ENCODE measurements at regions of chr2 and their contacts with region 1.

Region 1: GRCh38 chr2:27489498-27490397 is at the start of gene IFT172:
- DNase-seq: peak; percentile 99
- ATAC-seq: peak; percentile 99
- H3K4me3 ChIP-seq: peak within 1 kb of the TSS; percentile 69 to 83 (median 77)
- H3K27ac ChIP-seq: peak within 1 kb of the TSS; percentile 75 to 85 (median 83)
- H3K4me1 ChIP-seq: peaks cover 13 to 25% of the 10 kb centered on the region in 2 donors
- H3K27me3 ChIP-seq: peaks cover 0 to 7% (median 0%) of the 10 kb centered on the region in 3 donors
- CTCF ChIP-seq: no peak
- POLR2A ChIP-seq: peak; percentile 48 to 76
- total RNA-seq, gene IFT172: 3.1 to 16.8 (median 8.6) TPM

Region 2: GRCh38 chr2:27217217-27218121 is 272.3 kb before region 1 on chr2 and contains the start of gene CAD:
- in situ Hi-C with region 1: no loop called
- intact Hi-C with region 1: loop called (anchors 10 kb)
- DNase-seq: peak; percentile 72 to 76
- ATAC-seq: peak; percentile 63
- H3K4me3 ChIP-seq: peak within 1 kb of the TSS; percentile 57 to 65 (median 63)
- H3K27ac ChIP-seq: peak within 1 kb of the TSS; percentile 73 to 77 (median 74)
- H3K4me1 ChIP-seq: peaks cover 11 to 21% of the 10 kb centered on the region in 2 donors
- H3K27me3 ChIP-seq: no peaks in the 10 kb centered on the region
- CTCF ChIP-seq: peak in 4 of 5 experiments; percentile 10 to 34 (median 31)
- POLR2A ChIP-seq: no peak
- total RNA-seq, gene CAD: 2.7 to 10.2 (median 7.1) TPM

Region 3: GRCh38 chr2:27335311-27335710 is 154.4 kb before region 1 on chr2:
- in situ Hi-C with region 1: no loop called
- intact Hi-C with region 1: no loop called
- DNase-seq: no peak
- ATAC-seq: no peak
- H3K4me3 ChIP-seq: no peak overlapping the region
- H3K27ac ChIP-seq: no peak overlapping the region
- H3K4me1 ChIP-seq: no peaks in the 10 kb centered on the region
- H3K27me3 ChIP-seq: no peaks in the 10 kb centered on the region
- CTCF ChIP-seq: no peak
- POLR2A ChIP-seq: no peak

Region 4: DNA sequence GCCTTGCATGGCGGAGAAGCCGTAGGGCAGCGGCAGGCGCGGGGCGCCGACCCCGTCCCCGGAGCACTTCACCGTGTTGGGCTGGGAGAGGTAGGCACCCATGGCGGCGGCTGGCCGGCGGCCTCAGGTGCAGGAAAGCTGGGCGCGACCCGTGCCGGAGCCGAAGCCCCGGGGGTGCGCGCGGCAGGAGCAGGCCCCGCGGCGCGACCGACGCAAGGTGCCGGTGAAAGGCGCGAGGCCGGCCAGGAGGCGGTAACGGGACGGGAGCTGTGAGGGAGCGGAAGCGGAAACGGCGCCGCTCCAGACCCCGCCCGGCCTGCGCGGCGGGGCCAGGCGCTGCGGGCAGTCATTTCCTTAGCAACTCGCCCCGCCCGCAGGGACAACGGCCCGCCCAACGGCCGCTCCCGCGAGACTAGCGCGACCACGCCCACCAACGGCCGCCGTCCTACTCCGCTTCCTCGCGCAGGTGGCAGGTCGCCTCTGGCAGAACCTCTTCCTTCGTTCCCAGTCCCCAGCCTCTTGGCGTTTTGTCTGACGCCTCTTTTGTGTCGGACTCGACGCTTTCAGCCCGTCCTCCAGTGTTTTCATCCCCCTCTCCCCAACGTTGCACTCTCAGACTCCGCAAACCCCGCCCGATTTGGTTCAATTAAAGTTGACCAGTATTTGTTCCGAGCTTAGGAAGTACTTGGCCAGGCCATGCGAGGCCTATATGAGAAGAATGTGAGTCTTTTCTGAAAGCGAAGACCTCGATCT is 80.3 kb before region 1 on chr2 and contains the start of gene PPM1G:
- in situ Hi-C with region 1: no loop called
- intact Hi-C with region 1: loop called (anchors 1 kb)
- DNase-seq: peak; percentile 90 to 92
- ATAC-seq: peak; percentile 94 to 95
- H3K4me3 ChIP-seq: peak within 1 kb of the TSS; percentile 74 to 98 (median 96)
- H3K27ac ChIP-seq: peak within 1 kb of the TSS; percentile 89 to 97 (median 94)
- H3K4me1 ChIP-seq: peaks cover 15 to 24% of the 10 kb centered on the region in 2 donors
- H3K27me3 ChIP-seq: no peaks in the 10 kb centered on the region
- CTCF ChIP-seq: peak in 2 of 5 experiments; percentile 12 to 16
- POLR2A ChIP-seq: peak; percentile 57 to 72
- total RNA-seq, gene PPM1G: 47.2 to 111 (median 92.2) TPM

Region 5: GRCh38 chr2:27527182-27527581 is 37.4 kb after region 1 on chr2:
- in situ Hi-C with region 1: no loop called
- intact Hi-C with region 1: no loop called
- DNase-seq: no peak
- ATAC-seq: no peak
- H3K4me3 ChIP-seq: no peak overlapping the region
- H3K27ac ChIP-seq: no peak overlapping the region
- H3K4me1 ChIP-seq: no peaks in the 10 kb centered on the region
- H3K27me3 ChIP-seq: no peaks in the 10 kb centered on the region
- CTCF ChIP-seq: no peak
- POLR2A ChIP-seq: no peak

Region 6: GRCh38 chr2:27582695-27583389 is 93.1 kb after region 1 on chr2 and contains the start of gene ZNF512:
- in situ Hi-C with region 1: no loop called
- intact Hi-C with region 1: loop called (anchors 5 kb)
- DNase-seq: peak; percentile 68 to 80
- ATAC-seq: peak; percentile 82 to 92
- H3K4me3 ChIP-seq: peak within 1 kb of the TSS; percentile 54 to 86 (median 64)
- H3K27ac ChIP-seq: peak within 1 kb of the TSS; percentile 43 to 74 (median 63)
- H3K4me1 ChIP-seq: peaks cover 14 to 16% of the 10 kb centered on the region in 2 donors
- H3K27me3 ChIP-seq: no peaks in the 10 kb centered on the region
- CTCF ChIP-seq: peak in 1 of 5 experiments; percentile 5
- POLR2A ChIP-seq: peak in 1 of 2 donors; percentile 55
- total RNA-seq, gene ZNF512: 5.8 to 15.6 (median 8.4) TPM

Region 7: DNA sequence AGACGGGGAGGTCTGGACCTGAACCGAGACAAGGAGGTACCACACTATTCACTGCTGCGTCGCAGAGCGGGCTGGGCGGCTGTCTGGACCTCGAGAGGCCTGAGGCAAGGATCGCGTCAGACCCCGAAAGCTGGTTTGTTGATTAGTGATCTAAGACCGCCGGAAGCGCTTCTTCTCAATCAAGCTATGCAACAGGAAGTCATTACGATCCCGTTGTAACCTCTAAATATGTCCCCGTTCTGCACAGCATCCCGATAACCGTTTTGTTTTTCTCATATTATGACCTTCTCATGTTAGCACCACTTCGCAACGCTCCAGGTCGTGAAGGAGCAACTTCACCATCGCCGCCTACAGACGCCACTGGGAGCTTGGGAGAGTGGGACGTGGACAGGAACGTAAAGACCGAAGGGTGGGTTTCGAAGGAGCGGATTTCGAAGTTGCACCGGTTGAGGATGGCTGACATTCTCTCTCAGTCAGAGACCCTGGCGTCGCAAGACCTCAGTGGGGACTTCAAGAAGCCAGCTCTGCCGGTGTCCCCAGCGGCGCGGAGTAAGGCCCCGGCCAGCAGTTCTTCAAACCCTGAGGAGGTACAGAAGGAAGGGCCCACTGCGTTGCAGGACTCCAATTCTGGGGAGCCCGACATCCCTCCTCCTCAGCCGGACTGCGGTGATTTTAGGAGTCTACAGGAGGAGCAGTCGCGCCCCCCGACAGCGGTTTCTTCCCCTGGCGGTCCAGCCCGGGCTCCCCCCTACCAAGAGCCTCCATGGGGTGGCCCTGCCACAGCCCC is 173.9 kb after region 1 on chr2 and contains the starts of genes SLC4A1AP and SUPT7L:
- in situ Hi-C with region 1: no loop called
- intact Hi-C with region 1: loop called (anchors 10 kb)
- DNase-seq: peak; percentile 37 to 49
- ATAC-seq: peak; percentile 91 to 92
- H3K4me3 ChIP-seq: peak within 1 kb of the TSS; percentile 90 to 100 (median 98)
- H3K27ac ChIP-seq: peak within 1 kb of the TSS; percentile 92 to 99 (median 94)
- H3K4me1 ChIP-seq: peaks cover 29 to 31% of the 10 kb centered on the region in 2 donors
- H3K27me3 ChIP-seq: no peaks in the 10 kb centered on the region
- CTCF ChIP-seq: peak in 3 of 5 experiments; percentile 8 to 24 (median 13)
- POLR2A ChIP-seq: peak in 1 of 2 donors; percentile 8
- total RNA-seq, gene SLC4A1AP: 32.1 to 44.2 (median 34.6) TPM
- total RNA-seq, gene SUPT7L: 14.6 to 26.0 (median 21.9) TPM

Measured in gastrocnemius medialis (tissue), 4 donors.